Activated CD4-positive, alpha-beta memory T cell treated with anti-CD3 and anti-CD28 coated beads, Interleukin-2, amount 10 ng/mL, durations not matched to agents 7 days and 5 days (primary cell): ENCODE measurements at regions of chr9 and their contacts with region 1.

Region 1: GRCh38 chr9:32378993-32379729 is 5.3 kb upstream of the ACO1 start:
- DNase-seq: peak; percentile 49
- H3K4me3 Mint-ChIP-seq: no peak overlapping the region
- H3K27ac Mint-ChIP-seq: no peak overlapping the region
- H3K4me1 Mint-ChIP-seq: peaks cover 16% of the 10 kb centered on the region
- H3K27me3 Mint-ChIP-seq: peaks cover 35% of the 10 kb centered on the region

Region 2: GRCh38 chr9:32278991-32279390 is 100.2 kb before region 1 on chr9:
- CTCF ChIA-PET with region 1: no interaction called
- POLR2A ChIA-PET with region 1: no interaction called
- DNase-seq: no peak
- H3K4me3 Mint-ChIP-seq: no peak overlapping the region
- H3K27ac Mint-ChIP-seq: no peak overlapping the region
- H3K4me1 Mint-ChIP-seq: no peaks in the 10 kb centered on the region
- H3K27me3 Mint-ChIP-seq: no peaks in the 10 kb centered on the region

Region 3: DNA sequence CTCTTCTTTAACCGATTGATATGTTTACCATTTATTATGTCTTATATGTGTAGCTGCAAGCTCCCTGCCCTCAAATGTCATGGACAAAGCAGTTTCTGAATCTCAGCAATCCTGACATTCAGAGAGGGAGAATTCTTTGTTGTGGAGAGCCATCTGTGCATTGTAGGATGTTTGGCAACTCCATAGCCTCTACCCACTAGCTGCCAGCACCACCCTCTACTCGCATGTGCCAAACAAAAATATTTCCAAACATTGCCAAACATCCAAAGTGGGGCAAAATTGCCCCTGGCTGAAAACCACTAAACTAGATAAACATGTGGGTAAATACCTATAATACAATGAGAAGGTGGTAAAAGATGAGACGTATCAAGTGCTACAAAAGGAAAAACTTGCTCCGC is 43.6 kb before region 1 on chr9:
- CTCF ChIA-PET with region 1: no interaction called
- POLR2A ChIA-PET with region 1: no interaction called
- DNase-seq: no peak
- H3K4me3 Mint-ChIP-seq: no peak overlapping the region
- H3K27ac Mint-ChIP-seq: no peak overlapping the region
- H3K4me1 Mint-ChIP-seq: peaks cover 6% of the 10 kb centered on the region
- H3K27me3 Mint-ChIP-seq: no peaks in the 10 kb centered on the region

Region 4: DNA sequence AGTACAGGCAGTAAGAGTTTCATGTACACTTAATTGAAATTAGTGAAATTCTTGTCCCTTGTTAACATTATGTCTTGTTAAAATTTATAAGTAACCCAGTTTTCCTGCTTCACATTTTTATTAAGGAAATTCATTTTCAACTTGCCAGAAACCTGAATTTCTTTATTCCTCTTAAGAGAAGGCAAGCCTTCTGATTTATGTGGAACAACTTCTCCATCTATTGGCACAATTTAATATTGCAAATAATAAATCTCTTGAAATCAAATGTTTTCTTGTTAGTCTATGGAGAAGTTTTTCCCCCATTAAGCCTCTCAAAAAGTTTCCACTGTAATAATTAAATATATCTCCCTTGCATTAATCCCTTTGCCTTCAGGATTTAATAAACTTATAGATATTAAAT is 28.5 kb before region 1 on chr9:
- CTCF ChIA-PET with region 1: no interaction called
- POLR2A ChIA-PET with region 1: no interaction called
- DNase-seq: no peak
- H3K4me3 Mint-ChIP-seq: no peak overlapping the region
- H3K27ac Mint-ChIP-seq: no peak overlapping the region
- H3K4me1 Mint-ChIP-seq: no peaks in the 10 kb centered on the region
- H3K27me3 Mint-ChIP-seq: no peaks in the 10 kb centered on the region

Region 5: DNA sequence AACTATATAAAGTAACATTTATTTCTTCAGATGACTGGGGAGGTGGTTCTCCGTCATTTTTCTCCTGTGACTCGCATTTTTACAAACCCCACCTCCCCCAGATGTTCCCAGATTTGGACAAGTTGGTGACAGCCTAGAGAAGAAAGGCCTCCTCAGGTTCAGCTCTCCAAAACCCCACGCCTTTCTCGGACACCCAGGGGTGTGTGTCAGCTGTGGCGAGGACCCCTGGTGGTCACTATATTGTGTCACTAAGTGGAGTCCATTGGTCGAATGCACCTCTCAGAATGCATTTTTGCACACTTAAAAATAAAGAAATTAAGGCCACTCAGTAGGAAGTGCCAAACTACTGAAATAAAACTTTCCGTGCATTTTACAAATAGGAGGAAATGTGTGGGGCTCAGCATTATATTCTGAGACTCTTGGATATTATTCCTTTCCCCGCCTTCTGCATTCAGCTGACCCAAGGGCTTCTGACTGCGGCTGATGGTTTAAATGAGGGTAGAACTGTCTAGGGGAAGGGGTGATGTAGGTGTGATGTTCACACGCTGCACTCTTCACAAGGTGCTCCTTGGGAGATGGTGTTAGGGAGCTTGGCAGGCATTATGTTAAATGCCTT is 52.9 kb after region 1 on chr9:
- CTCF ChIA-PET with region 1: interaction called, 23 read pairs
- POLR2A ChIA-PET with region 1: no interaction called
- DNase-seq: peak; percentile 22
- H3K4me3 Mint-ChIP-seq: no peak overlapping the region
- H3K27ac Mint-ChIP-seq: no peak overlapping the region
- H3K4me1 Mint-ChIP-seq: peaks cover 3% of the 10 kb centered on the region
- H3K27me3 Mint-ChIP-seq: no peaks in the 10 kb centered on the region

Region 6: GRCh38 chr9:32454280-32454679 is 75.1 kb after region 1 on chr9:
- CTCF ChIA-PET with region 1: no interaction called
- POLR2A ChIA-PET with region 1: no interaction called
- DNase-seq: no peak
- H3K4me3 Mint-ChIP-seq: no peak overlapping the region
- H3K27ac Mint-ChIP-seq: no peak overlapping the region
- H3K4me1 Mint-ChIP-seq: no peaks in the 10 kb centered on the region
- H3K27me3 Mint-ChIP-seq: no peaks in the 10 kb centered on the region

Region 7: DNA sequence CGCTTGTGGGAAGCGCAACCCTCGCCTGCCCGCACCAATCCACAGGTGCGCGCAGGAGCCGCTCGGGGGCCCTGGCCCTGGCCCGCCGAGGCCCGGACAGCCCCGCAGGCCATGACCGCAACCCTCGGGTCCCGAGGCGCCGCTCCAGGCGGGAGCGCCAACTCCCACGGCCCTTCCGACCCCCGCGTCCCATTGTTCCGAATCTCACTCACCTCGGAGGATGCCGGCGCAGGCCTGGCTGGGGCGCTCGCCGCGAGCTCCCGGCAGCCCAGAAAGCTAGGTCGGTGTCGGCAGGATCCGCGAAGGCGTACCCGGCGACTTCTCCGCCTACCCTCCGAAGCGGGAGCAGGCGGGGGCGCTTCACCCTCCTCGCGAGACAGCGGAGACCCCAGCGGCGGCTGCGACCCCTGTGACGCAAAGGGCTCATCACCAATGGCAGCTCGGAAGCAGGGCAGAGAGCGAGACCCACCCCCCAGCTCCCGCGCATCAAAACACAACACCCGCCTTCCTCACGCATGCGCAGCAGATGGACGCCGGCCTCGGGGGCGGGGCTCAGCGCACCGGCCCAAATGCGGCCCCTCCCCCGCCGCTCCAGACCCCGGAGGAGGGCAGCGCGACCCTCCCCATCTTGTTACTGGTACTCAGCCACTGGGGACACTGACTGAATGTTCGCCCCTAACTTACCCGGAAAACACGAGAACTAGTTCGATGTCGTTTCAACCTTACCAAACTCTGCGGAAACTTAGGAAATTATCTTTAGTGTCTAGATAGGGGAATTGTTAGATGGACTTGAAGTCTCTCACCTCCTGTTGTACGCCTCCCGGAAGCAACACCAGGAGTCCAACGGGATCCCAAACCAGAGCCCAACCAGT is 171.6 kb after region 1 on chr9:
- CTCF ChIA-PET with region 1: interaction called, 41 read pairs
- POLR2A ChIA-PET with region 1: interaction called, 30 read pairs
- DNase-seq: peak; percentile 94
- H3K4me3 Mint-ChIP-seq: peak overlapping the region; percentile 91
- H3K27ac Mint-ChIP-seq: peak overlapping the region; percentile 100
- H3K4me1 Mint-ChIP-seq: peaks cover 44% of the 10 kb centered on the region
- H3K27me3 Mint-ChIP-seq: no peaks in the 10 kb centered on the region

Region 8: GRCh38 chr9:32579706-32580331 is 200.7 kb after region 1 on chr9:
- CTCF ChIA-PET with region 1: interaction called, 416 read pairs
- POLR2A ChIA-PET with region 1: interaction called, 20 read pairs
- DNase-seq: peak; percentile 80
- H3K4me3 Mint-ChIP-seq: no peak overlapping the region
- H3K27ac Mint-ChIP-seq: no peak overlapping the region
- H3K4me1 Mint-ChIP-seq: peaks cover 5% of the 10 kb centered on the region
- H3K27me3 Mint-ChIP-seq: peaks cover 17% of the 10 kb centered on the region

Region 9: GRCh38 chr9:32968101-32969011 is 589.2 kb after region 1 on chr9:
- CTCF ChIA-PET with region 1: interaction called, 25 read pairs
- POLR2A ChIA-PET with region 1: no interaction called
- DNase-seq: peak; percentile 61
- H3K4me3 Mint-ChIP-seq: no peak overlapping the region
- H3K27ac Mint-ChIP-seq: no peak overlapping the region
- H3K4me1 Mint-ChIP-seq: peaks cover 2% of the 10 kb centered on the region
- H3K27me3 Mint-ChIP-seq: no peaks in the 10 kb centered on the region